PC-9 (cell line): ENCODE measurements at regions of chr5 and their contacts with region 1.

Region 1: GRCh38 chr5:160209963-160210374 is 19.3 kb upstream of the FABP6 start:
- DNase-seq: peak; percentile 50 to 84
- H3K4me3 ChIP-seq: no peak overlapping the region
- H3K27ac ChIP-seq: no peak overlapping the region
- H3K4me1 ChIP-seq: peaks cover 14% of the 10 kb centered on the region
- H3K27me3 ChIP-seq: no peaks in the 10 kb centered on the region
- CTCF ChIP-seq: no peak

Region 2: DNA sequence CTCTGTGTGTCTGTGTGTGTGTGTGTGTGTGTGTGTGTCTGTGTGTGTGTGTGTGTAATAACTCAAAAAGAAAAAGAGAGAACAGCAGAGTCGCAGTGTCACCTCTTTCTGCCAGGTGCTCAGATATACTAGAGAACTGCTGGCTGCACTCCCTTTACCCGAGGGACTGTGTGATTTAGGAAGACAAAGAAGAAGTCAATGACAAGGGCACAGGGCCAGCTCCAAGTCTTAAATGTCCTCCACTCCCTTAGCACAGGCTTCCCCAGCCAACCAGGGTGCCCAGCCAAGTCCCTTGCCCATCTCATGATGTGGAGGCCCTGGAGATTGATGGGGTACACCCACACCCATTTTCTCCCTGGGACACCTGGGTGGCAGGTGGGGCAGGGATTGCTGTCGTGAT is 93.7 kb after region 1 on chr5:
- CTCF ChIA-PET with region 1: interaction called, 11 read pairs
- POLR2A ChIA-PET with region 1: no interaction called
- intact Hi-C with region 1: no loop called
- DNase-seq: no peak
- H3K4me3 ChIP-seq: no peak overlapping the region
- H3K27ac ChIP-seq: no peak overlapping the region
- H3K4me1 ChIP-seq: no peaks in the 10 kb centered on the region
- H3K27me3 ChIP-seq: no peaks in the 10 kb centered on the region
- CTCF ChIP-seq: no peak